BJ (cell line): ENCODE measurements at regions of chr4 and their contacts with region 1.

Region 1: GRCh38 chr4:77629885-77630284 is 24.3 kb downstream of the CXCL13 start:
- DNase-seq: no peak
- H3K4me3 ChIP-seq: no peak overlapping the region
- H3K27me3 ChIP-seq: peaks cover 3% of the 10 kb centered on the region; the same call in 1 of the 2 replicates
- CTCF ChIP-seq: no peak

Region 2: DNA sequence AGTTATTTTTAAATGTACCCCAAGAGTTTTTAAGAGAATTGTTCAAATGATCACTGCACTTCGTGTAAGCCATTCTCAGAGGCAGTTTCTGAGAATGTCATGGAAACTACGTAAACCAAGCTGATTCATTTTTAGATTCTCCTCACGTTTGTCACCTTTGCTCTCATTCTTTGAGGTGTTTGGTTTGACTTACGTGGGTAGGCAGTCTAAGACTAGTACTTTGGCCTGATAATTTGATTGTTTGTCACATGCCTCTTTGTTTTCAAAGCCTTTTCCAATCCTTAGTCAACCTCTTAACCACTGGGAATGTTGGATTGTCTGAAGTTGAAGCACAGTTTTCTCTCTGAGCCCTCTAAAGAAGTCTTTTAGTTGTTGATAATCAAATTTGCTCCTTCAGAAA is 669.9 kb before region 1 on chr4:
- CTCF ChIA-PET with region 1: no interaction called
- POLR2A ChIA-PET with region 1: no interaction called
- DNase-seq: no peak
- H3K4me3 ChIP-seq: no peak overlapping the region
- H3K27me3 ChIP-seq: no peaks in the 10 kb centered on the region
- CTCF ChIP-seq: no peak

Region 3: GRCh38 chr4:77618383-77619122 is 11.3 kb before region 1 on chr4:
- CTCF ChIA-PET with region 1: interaction called, 28 read pairs
- POLR2A ChIA-PET with region 1: no interaction called
- DNase-seq: peak; percentile 5
- H3K4me3 ChIP-seq: no peak overlapping the region
- H3K27me3 ChIP-seq: peaks cover 15% of the 10 kb centered on the region
- CTCF ChIP-seq: peak; percentile 90